ENCODE measurements at regions of chr1 and their contacts with region 1.

Region 1: GRCh38 chr1:55375617-55376258 is 160.6 kb upstream of the USP24 start:
- DNase-seq: peak; percentile 4
- H3K4me3 ChIP-seq: no peak overlapping the region
- H3K27ac ChIP-seq: no peak overlapping the region
- H3K4me1 ChIP-seq: no peaks in the 10 kb centered on the region
- H3K27me3 ChIP-seq: no peaks in the 10 kb centered on the region
- CTCF ChIP-seq: peak; percentile 91 to 92

Region 2: GRCh38 chr1:55478742-55479141 is 103.0 kb after region 1 on chr1:
- CTCF ChIA-PET with region 1: no interaction called
- dilution Hi-C with region 1: no loop called
- in situ Hi-C with region 1: no loop called
- intact Hi-C with region 1: loop called (anchors 5 kb)
- DNase-seq: peak; percentile 21
- H3K4me3 ChIP-seq: no peak overlapping the region
- H3K27ac ChIP-seq: no peak overlapping the region
- H3K4me1 ChIP-seq: peaks cover 3% of the 10 kb centered on the region
- H3K27me3 ChIP-seq: no peaks in the 10 kb centered on the region
- CTCF ChIP-seq: peak; percentile 43

Region 3: GRCh38 chr1:55685560-55685959 is 309.8 kb after region 1 on chr1:
- CTCF ChIA-PET with region 1: no interaction called
- dilution Hi-C with region 1: no loop called
- in situ Hi-C with region 1: no loop called
- intact Hi-C with region 1: loop called (anchors 5 kb)
- DNase-seq: no peak
- H3K4me3 ChIP-seq: no peak overlapping the region
- H3K27ac ChIP-seq: no peak overlapping the region
- H3K4me1 ChIP-seq: no peaks in the 10 kb centered on the region
- H3K27me3 ChIP-seq: no peaks in the 10 kb centered on the region
- CTCF ChIP-seq: no peak

Region 4: DNA sequence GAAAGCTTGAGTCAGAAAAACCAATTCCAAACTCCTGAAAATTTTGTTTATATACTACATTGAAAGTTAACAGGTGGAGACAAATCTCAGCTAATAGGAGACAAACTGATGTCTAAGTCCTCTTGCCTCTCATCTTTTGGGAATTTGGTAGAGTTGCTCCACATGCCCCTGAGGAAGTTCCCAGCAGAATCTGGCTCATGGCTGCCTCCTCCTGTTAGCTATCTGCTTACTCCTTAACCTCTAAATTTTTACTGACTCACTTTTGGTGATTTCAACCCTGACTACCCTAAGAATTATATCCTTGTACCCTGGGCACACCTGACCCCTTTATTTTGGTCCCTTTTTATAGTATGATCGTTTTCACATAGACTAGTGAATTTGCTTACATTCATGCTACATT is 473.2 kb after region 1 on chr1:
- CTCF ChIA-PET with region 1: no interaction called
- dilution Hi-C with region 1: no loop called
- in situ Hi-C with region 1: no loop called
- intact Hi-C with region 1: loop called (anchors 5 kb)
- DNase-seq: peak; percentile 20
- H3K4me3 ChIP-seq: no peak overlapping the region
- H3K27ac ChIP-seq: no peak overlapping the region
- H3K4me1 ChIP-seq: no peaks in the 10 kb centered on the region
- H3K27me3 ChIP-seq: no peaks in the 10 kb centered on the region
- CTCF ChIP-seq: peak in 1 of 2 donors; percentile 64

Region 5: GRCh38 chr1:55893155-55893554 is 517.4 kb after region 1 on chr1:
- CTCF ChIA-PET with region 1: no interaction called
- dilution Hi-C with region 1: no loop called
- in situ Hi-C with region 1: no loop called
- intact Hi-C with region 1: loop called (anchors 1 kb)
- DNase-seq: peak; percentile 55
- H3K4me3 ChIP-seq: no peak overlapping the region
- H3K27ac ChIP-seq: no peak overlapping the region
- H3K4me1 ChIP-seq: no peaks in the 10 kb centered on the region
- H3K27me3 ChIP-seq: no peaks in the 10 kb centered on the region
- CTCF ChIP-seq: peak; percentile 43 to 59

Measured in mammary epithelial cell (primary cell).